BJ (cell line): ENCODE measurements at regions of chr6 and their contacts with region 1.

Region 1: DNA sequence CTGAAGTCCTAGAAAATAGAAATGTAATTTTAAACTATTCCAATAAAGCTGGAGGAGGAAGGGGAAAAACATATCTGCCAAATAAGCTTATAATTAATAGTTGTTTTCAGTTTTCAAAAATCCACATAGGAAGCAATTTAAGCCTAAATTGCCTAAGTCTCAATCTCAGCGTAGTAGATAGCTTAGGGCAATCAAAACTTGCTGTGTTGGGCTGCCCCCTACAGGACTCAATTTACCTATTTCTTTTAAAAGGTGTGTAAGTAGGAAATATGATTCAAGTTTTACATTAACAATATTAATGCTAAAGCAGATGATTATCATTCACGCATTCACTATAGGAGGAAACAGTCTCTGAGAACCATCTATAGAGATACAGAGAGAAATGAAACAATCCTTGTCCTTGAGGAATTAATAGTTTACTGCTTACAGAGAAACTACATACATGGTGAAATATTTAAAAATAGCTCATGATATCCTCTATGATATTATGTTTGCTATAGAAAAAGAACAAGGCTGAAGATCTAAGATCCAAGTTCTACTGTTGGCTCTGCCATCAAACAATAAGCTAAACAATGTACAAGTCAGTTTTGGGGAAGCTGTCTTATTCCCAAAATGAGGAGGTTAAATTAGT is 102.1 kb downstream of the ATG5 start:
- DNase-seq: peak; percentile 35
- H3K4me3 ChIP-seq: no peak overlapping the region
- H3K27me3 ChIP-seq: no peaks in the 10 kb centered on the region
- CTCF ChIP-seq: peak; percentile 63

Region 2: DNA sequence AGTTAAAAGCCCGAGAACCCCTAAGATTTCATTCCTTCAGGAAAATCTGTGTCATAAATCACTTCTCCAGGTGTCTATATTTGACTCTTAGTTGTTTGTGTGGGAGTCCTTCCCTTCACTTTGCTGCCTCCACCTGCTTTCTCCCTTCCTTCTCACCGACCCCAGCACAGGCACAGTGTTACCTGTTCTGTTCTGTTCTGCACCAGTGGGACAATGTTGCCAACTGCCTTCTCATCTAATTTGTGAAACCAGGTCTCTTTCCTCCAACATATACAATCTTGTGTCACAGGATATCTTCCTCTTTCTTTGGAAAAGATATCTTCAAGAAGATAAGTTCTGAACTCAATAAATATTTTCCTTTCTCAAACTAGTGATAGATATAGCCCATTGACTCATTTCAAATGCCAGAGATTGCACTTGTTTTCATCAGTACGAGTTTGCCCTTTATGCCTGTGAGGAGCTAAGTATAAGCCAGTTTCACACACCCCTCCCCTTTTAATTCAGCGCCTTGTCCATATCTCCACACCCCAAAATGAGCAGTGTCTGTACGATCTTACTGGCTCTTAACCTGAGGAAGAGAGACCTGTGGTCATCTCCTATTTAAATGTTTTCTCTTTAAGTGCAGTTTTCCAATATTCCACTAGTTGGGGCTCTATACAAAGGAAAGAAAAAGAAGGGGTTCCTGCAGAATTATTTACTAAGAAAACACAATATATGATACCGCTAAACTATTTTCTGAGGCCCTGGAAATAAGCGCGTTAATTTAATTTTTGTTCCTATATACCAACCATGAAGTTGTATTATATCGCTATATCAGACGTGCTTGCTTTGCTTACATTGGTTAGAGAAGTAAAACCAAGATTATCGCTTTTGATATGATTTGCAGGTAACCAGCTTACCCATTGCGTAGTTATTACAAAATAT is 738.9 kb before region 1 on chr6:
- CTCF ChIA-PET with region 1: interaction called, 17 read pairs
- POLR2A ChIA-PET with region 1: no interaction called
- DNase-seq: no peak
- H3K4me3 ChIP-seq: no peak overlapping the region
- H3K27me3 ChIP-seq: no peaks in the 10 kb centered on the region
- CTCF ChIP-seq: peak; percentile 85

Region 3: GRCh38 chr6:105992315-105992961 is 231.0 kb before region 1 on chr6:
- CTCF ChIA-PET with region 1: interaction called, 16 read pairs
- POLR2A ChIA-PET with region 1: interaction called, 3 read pairs
- DNase-seq: peak; percentile 19
- H3K4me3 ChIP-seq: peak overlapping the region; percentile 60
- H3K27me3 ChIP-seq: no peaks in the 10 kb centered on the region
- CTCF ChIP-seq: no peak

Region 4: GRCh38 chr6:106085984-106086813 is 137.2 kb before region 1 on chr6 and contains the start of gene PRDM1:
- CTCF ChIA-PET with region 1: interaction called, 37 read pairs
- POLR2A ChIA-PET with region 1: no interaction called
- DNase-seq: no peak
- H3K4me3 ChIP-seq: peak within 1 kb of the TSS; percentile 73
- H3K27me3 ChIP-seq: no peaks in the 10 kb centered on the region
- CTCF ChIP-seq: peak; percentile 20; the same call in 1 of the 2 replicates
- polyA plus RNA-seq, gene PRDM1: 4.6 and 5.2 TPM in 2 replicates

Region 5: DNA sequence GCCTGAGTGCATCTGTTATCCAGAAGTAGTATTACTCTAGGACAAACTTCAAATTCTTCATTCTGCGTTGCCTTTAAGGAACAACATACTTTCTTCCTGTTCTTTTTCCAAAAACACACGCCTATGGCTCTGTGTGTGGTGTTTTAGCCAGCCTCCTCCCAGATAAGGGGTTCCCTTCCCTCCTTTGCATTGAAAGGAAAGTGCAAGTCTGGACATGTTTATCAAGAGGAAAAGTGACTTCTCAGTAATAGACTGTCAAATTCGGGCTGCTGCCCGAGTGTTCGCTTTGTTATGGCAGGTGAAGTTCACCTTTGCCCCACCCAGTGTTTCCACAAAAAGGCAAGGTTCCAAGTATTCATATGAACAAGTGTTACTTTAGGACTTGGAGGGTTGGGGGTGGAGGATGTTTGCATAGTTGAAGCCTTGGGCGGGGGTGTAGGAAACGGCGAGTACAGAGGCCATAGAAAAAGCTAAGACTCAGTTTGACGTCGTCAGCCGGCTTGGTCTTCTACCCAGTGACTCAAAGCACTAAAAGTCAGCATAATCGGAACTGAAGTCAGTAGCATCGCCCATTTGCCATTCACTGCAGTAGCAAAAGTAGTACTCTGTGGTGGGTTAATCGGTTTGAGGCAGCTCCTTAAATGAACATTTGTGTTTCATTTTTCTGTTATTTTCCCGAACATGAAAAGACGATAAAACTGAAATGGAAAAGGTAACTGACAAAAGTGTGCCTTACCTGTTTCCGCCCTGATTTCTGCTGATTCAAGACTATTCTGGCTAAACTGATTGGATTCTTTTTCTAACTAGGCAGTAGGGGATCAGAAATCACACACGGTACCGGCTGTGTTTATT is 124.8 kb before region 1 on chr6:
- CTCF ChIA-PET with region 1: interaction called, 27 read pairs
- POLR2A ChIA-PET with region 1: no interaction called
- DNase-seq: no peak
- H3K4me3 ChIP-seq: peak overlapping the region; percentile 28
- H3K27me3 ChIP-seq: no peaks in the 10 kb centered on the region
- CTCF ChIP-seq: no peak